Activated T-helper 2 cell treated with anti-CD3 and anti-CD28 coated beads, Interferon-gamma antibody, Interleukin-2, Interleukin-4, amounts not matched to agents 10 μg/mL and 5 μg/mL and 100 μg/mL, durations not matched to agents 14 hours and 24 hours and 36 hours (primary cell): ENCODE measurements at regions of chr14 and their contacts with region 1.

Region 1: DNA sequence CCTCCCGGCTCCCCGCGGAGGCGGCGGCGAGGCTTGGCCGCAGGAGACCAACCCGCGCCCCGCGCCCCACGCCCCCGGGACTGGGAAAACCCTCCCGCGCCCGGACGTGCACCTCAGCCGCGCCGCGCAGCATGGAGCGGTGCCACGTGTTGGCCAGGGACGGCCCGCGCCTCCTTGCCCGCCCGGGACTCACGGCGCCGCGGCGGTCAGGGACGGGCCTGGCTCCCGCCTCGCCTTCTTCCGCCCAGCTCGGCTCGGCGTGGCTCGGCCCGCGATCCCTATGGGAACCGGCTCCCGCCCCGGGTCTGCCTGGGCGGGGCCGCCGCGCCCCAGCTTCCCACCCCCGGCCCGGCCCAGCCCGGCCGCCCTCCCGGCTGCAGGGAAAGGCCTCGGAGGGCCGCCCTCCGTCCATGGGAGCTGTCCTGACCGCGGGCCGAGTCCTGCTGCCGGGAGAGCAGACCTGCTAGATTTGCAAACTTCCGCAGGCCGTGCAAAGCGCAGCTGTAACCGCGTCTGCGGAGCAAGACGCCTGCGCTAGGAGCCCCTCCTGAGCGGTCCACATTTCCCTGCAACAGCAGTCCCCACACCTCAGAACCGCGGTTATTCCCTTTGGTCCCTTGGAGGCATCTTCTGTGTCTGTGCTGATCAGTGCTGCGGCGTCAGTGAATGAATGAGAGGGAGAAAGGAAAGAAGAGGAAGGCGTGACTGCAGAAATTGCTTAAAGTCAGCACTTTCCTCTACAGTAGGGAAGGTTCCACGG is at the start of gene CDKL1:
- DNase-seq: peak; percentile 21
- H3K4me3 Mint-ChIP-seq: peak within 1 kb of the TSS; percentile 72
- H3K27ac Mint-ChIP-seq: no peak within 1 kb of the TSS
- H3K4me1 Mint-ChIP-seq: peaks cover 10% of the 10 kb centered on the region
- H3K27me3 Mint-ChIP-seq: peaks cover 37% of the 10 kb centered on the region
- total RNA-seq, gene CDKL1: 3.6 and 5.0 TPM in 2 replicates

Region 2: GRCh38 chr14:50342221-50343078 is 54.4 kb before region 1 on chr14:
- intact Hi-C with region 1: loop called (anchors 5 kb)
- DNase-seq: peak; percentile 33
- H3K4me3 Mint-ChIP-seq: no peak overlapping the region
- H3K27ac Mint-ChIP-seq: peak overlapping the region; percentile 44
- H3K4me1 Mint-ChIP-seq: peaks cover 27% of the 10 kb centered on the region
- H3K27me3 Mint-ChIP-seq: peaks cover 11% of the 10 kb centered on the region

Region 3: DNA sequence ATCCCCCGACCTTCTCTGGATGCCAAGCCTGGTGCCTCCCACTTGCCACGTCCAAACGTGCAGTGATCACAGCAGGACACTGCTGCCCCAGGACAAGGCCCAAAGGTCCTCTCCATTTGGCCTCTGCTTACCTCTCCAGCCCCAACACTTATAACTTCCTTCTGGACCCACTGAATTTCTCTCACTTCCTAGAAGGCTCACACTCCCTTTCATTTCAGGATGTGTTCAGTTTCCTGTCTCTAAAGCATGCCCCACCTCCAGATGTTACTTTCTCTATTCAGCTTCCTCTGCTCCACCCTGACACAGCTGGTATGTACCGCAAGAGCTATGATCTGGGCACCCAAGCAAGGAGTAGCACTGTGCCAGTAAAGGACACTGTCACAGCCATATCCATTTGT is 33.1 kb before region 1 on chr14:
- intact Hi-C with region 1: loop called (anchors 2 kb)
- DNase-seq: peak; percentile 59
- H3K4me3 Mint-ChIP-seq: peak overlapping the region; percentile 79
- H3K27ac Mint-ChIP-seq: peak overlapping the region; percentile 88
- H3K4me1 Mint-ChIP-seq: peaks cover 29% of the 10 kb centered on the region
- H3K27me3 Mint-ChIP-seq: no peaks in the 10 kb centered on the region

Region 4: GRCh38 chr14:50532502-50533240 is 135.9 kb after region 1 on chr14 and contains the start of gene MAP4K5:
- intact Hi-C with region 1: loop called (anchors 2 kb)
- DNase-seq: peak; percentile 82
- H3K4me3 Mint-ChIP-seq: peak within 1 kb of the TSS; percentile 88
- H3K27ac Mint-ChIP-seq: peak within 1 kb of the TSS; percentile 51
- H3K4me1 Mint-ChIP-seq: peaks cover 30% of the 10 kb centered on the region
- H3K27me3 Mint-ChIP-seq: peaks cover 34% of the 10 kb centered on the region
- total RNA-seq, gene MAP4K5: 21.0 and 23.1 TPM in 2 replicates